Head of caudate nucleus (tissue), 42 donors: ENCODE measurements at regions of chr19 and their contacts with region 1.

Region 1: DNA sequence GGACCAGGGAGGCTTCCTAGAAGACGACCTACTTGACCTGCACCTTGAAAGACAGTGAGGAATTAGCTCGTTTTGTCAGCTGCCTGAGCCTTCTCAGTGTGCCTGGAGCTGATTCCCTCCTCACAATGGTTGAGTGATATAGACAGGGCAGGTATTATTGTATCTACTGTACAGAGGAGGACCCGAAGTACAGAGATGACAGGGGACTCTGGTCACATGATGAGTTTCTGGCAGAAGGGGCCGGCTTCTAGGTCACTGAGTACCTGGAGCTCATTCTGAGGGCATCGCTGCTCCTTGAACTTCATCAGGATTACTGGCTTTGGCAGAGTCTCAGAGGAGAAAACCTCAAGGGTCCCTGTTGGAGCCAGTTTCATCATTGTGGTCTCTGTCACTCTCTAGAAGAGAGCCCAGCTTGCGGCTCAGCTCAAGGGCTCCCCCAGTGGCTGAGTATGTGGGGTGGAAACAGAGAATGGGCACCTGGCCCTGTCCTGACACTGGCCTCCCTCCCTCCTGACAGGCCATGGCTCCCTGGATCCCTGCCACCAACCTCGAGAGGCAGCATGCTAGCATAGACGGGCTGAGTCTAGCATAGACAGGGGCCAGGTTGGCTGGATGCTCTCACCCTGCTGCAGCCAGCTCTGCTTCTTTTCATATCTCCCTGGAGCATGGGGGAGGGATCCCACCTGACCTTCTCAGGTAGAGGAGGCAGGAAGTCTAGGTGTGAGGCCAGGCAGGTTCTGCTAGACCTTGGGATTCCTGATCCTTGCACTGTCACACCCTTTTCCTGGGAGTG is 38.7 kb downstream of the NFIX start:
- DNase-seq: peak in 41 of 42 donors; percentile 63 to 94 (median 81)

Region 2: GRCh38 chr19:12815088-12815487 is 218.9 kb before region 1 on chr19:
- intact Hi-C with region 1: no loop called
- DNase-seq: no peak

Region 3: DNA sequence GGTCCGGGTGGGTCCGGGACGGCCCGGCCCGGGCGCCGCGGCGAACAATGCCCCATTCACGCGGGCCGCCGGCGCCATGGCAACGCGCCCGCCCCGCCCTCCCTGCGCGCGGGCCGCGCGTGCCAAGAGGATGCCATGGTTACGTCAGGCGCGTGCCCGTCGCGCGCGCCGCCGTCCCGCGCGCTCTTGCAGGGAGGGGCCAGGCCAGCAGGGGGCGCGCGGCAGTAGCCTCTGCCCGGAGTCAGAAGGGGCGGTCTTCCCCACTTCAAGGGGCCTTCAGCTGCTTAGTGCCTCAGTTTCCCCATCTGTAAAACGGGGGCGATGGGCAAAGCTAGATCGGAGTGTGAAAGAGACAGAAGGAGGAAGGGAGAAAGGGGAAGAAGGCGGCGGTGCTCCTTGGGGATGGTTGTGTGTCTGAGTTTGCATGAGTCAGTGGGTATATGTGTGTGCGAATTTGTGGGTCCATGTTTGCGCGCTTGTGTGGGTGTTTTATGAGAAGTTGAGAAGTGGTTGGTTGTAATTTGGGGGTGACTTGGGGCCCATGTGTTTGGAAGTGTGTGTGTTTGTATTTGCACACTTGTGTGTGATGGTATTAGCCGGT is 50.4 kb before region 1 on chr19:
- intact Hi-C with region 1: loop called (anchors 5 kb)
- DNase-seq: peak; percentile 59 to 94 (median 86)

Region 4: GRCh38 chr19:13060964-13061927 is 27.2 kb after region 1 on chr19:
- intact Hi-C with region 1: loop called (anchors 5 kb)
- DNase-seq: peak; percentile 75 to 97 (median 91)

Region 5: DNA sequence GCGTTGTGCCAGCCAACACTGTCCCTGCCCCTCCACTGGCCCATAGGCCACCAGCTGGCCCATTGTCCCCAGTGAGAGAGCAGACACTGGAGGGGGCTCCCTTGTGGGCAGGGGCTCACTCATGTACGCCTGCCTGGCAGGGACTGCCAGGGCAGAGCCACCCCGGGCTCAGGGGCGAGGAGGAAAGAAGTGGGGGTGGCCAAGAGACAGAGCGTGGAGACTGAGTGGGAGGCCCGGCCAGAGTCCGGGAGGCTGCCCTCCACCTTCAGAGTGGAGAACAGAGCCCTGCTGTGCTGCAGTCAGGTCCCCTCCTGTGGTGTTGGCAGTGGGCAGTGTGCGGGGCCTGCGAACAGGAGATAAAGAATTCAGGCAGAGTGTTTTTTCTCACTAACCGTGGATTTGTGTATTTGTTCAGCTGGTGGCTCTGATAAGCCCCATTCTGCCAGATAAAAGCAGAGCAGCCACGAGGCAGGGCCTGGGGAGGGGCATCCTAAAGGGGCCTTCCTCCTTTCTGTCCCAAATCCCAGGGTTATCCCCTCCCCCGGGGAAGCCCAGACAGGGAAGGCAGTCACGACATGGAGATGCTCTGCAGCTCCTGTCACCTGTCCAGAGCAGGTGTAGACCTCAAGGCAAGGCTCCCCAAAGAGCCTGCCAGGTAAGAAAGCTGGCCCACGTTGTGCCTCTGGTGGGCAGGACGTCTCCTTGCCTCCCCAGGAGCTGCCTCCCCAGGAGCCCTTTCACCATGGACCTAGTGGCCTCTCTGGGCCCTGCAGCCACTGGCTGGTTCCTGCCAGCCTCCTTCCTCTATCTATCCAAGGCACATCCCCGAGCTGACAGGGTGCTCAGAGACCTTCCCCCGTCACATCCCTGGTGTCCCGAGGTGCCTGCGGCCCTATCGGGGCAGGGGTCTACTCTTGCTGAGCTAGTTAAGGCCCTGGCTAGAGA is 35.7 kb after region 1 on chr19:
- intact Hi-C with region 1: loop called (anchors 5 kb)
- DNase-seq: peak in 2 of 42 donors; percentile 38 to 44

Region 6: DNA sequence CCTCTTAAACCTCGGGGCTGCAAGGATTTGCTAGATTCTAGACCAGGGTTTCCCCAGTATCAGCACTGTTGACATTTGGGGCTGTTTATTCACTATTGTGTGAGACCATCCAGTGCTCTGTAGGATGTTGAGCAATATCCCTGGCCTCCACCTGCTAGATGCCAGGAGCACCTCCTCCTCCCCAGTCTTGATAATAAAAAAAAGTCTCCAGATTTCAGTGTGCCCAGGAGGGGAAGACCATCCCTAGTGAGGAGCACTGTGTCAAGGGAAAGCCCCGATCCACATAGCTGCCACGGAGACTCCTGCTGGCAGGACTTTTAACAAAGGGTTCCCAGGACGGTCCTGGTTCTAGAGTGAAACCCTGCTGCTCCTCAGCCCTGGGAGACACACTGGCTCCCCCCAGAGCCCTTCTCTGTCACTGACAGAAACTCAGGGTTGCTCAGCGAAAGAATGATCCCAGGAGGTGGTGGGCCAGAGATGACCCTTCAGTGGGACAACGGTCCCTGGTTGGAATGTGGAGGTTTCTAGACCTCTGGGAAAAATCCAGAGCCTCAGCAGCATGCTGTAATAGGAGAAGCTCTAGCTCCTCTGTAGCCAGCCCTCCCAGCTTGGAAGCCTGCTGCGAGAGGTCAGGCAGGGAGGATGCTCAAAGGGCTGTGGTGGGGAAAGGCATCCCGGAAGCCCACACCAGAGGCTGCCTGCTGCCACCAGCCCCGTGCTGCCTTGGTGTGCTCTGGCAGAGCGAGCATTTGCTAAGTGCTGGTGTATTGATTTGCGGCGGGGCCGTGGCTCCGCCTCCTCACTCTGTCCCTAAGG is 48.4 kb after region 1 on chr19:
- intact Hi-C with region 1: no loop called
- DNase-seq: peak in 23 of 42 donors; percentile 39 to 81 (median 64)